Heart left ventricle (tissue), 16 donors: ENCODE measurements at regions of chr22 and their contacts with region 1.

Region 1: DNA sequence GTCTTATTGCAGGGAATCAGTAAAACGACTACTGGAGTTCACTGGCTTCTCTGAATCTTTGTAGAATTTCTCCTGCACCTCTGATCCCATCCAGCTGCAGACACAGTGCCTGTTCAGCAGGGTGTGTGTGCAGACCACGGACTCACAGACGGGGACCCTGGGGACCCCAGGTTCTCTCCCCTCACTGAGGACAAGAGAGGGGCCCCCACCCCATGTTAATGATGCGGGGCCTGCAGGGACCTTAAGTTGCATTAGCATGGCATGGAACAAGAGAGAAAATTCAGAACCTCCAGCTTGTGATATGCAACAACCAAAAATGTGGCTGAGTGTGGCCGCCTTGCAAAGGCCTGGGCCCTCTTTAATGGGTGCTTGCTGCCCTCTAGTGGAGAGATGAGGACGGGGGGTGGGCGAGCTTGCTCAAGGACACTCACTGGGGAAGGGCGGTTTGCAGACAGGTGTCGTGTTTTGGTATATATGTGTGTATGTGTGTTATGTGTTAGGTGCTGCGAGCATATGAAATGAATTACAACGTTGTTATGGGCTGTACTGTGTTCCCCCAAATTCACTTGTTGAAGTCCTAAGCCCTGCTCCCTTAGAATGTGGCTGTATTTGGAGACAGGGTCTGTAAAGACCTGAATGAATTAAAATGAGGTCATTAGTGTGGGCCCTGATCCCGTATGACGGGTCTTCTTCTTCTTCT is 84.4 kb upstream of the SEPTIN5 start:
- DNase-seq: peak; percentile 75 to 89 (median 78)
- ATAC-seq: peak; percentile 82 to 93 (median 86)
- H3K4me3 ChIP-seq: no peak overlapping the region
- H3K27ac ChIP-seq: no peak overlapping the region
- H3K4me1 ChIP-seq: peaks cover 0 to 4% (median 0%) of the 10 kb centered on the region in 12 donors
- H3K27me3 ChIP-seq: peaks cover 0 to 8% (median 0%) of the 10 kb centered on the region in 9 donors
- CTCF ChIP-seq: peak; percentile 82 to 99 (median 91)
- POLR2A ChIP-seq: no peak

Region 2: GRCh38 chr22:19143967-19144400 is 485.9 kb before region 1 on chr22:
- intact Hi-C with region 1: loop called in 8 of 10 experiments (anchors 5 to 10 kb)
- DNase-seq: no peak
- ATAC-seq: no peak
- H3K4me3 ChIP-seq: peak overlapping the region; percentile 61 to 94 (median 80)
- H3K27ac ChIP-seq: peak overlapping the region in 11 of 12 donors; percentile 3 to 86 (median 78)
- H3K4me1 ChIP-seq: peaks cover 0 to 15% (median 9%) of the 10 kb centered on the region in 12 donors
- H3K27me3 ChIP-seq: peaks cover 6 to 18% (median 13%) of the 10 kb centered on the region in 9 donors
- CTCF ChIP-seq: no peak
- POLR2A ChIP-seq: no peak

Region 3: GRCh38 chr22:19291580-19292457 is 338.1 kb before region 1 on chr22 and contains the start of gene CLTCL1:
- intact Hi-C with region 1: loop called in 2 of 10 experiments (anchors 5 kb)
- DNase-seq: peak; percentile 86 to 93 (median 89)
- ATAC-seq: peak; percentile 65 to 94 (median 88)
- H3K4me3 ChIP-seq: peak within 1 kb of the TSS; percentile 62 to 100 (median 92)
- H3K27ac ChIP-seq: peak within 1 kb of the TSS; percentile 64 to 93 (median 82)
- H3K4me1 ChIP-seq: peaks cover 0 to 49% (median 24%) of the 10 kb centered on the region in 12 donors
- H3K27me3 ChIP-seq: no peaks in the 10 kb centered on the region
- CTCF ChIP-seq: no peak
- POLR2A ChIP-seq: peak in 1 of 2 donors; percentile 70
- total RNA-seq, gene CLTCL1: 7.6 to 20.9 (median 10.4) TPM

Region 4: GRCh38 chr22:19488884-19489843 is 140.7 kb before region 1 on chr22:
- intact Hi-C with region 1: loop called in 1 of 10 experiments (anchors 2 kb)
- DNase-seq: no peak
- ATAC-seq: peak in 3 of 4 donors; percentile 50 to 54 (median 52)
- H3K4me3 ChIP-seq: no peak overlapping the region
- H3K27ac ChIP-seq: no peak overlapping the region
- H3K4me1 ChIP-seq: peaks cover 0 to 6% (median 0%) of the 10 kb centered on the region in 12 donors
- H3K27me3 ChIP-seq: no peaks in the 10 kb centered on the region
- CTCF ChIP-seq: peak in 3 of 12 donors; percentile 9 to 32 (median 19)
- POLR2A ChIP-seq: no peak

Region 5: DNA sequence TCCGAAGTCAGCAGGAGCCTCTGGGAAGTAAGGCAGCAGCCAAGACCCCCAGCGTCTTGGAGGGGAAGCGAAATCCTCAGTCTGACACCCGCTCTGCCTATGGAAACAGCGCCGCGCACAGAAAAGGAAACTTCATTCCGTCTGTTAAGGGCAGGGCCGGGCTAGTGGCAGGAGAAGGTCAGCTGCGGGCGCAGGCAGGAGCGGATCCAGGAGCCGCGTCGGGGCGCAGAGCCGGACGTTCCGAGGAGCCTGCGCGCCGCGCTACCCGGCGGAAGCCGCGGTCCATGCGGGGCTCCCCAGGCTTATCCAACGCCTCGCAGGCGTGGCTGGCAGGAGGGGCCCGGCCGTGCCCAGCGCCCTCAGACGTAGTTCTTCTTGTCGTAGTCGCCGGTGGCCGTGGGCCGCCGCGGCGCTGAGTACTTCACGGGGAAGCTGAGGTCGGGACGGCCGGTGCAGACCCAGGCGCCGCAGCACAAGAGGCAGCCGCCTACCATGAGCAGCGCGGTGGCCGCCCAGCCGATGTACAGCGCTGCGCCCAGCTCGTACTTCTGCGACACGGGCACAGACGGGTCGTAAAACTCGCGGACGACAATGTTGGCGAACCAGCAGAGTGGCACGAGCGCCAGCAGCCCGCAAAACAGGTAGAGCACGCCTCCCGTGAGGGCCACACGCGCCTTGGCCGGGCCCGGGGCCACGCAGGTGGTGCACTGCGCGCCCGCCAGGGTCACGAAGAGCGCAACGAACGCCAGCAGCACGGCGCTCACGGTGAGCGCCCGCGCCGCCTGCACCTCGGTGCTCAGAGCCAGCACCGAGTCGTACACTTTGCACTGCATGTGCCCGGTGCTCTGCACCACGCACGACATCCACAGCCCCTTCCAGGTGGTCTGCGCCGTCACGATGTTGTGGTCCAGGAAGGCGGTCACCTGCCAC is 106.4 kb before region 1 on chr22:
- intact Hi-C with region 1: loop called in 1 of 10 experiments (anchors 10 kb)
- DNase-seq: no peak
- ATAC-seq: peak in 1 of 4 donors; percentile 29
- H3K4me3 ChIP-seq: peak overlapping the region; percentile 36 to 80 (median 62)
- H3K27ac ChIP-seq: peak overlapping the region; percentile 71 to 97 (median 88)
- H3K4me1 ChIP-seq: peaks cover 5 to 64% (median 32%) of the 10 kb centered on the region in 12 donors
- H3K27me3 ChIP-seq: peaks cover 9 to 35% (median 20%) of the 10 kb centered on the region in 9 donors
- CTCF ChIP-seq: no peak
- POLR2A ChIP-seq: no peak